ENCODE measurements at regions of chr3 and their contacts with region 1.

Region 1: GRCh38 chr3:55897573-55898224 is 410.6 kb upstream of the WNT5A start:
- DNase-seq: peak; percentile 60
- H3K4me3 Mint-ChIP-seq: no peak overlapping the region
- H3K27ac Mint-ChIP-seq: no peak overlapping the region
- H3K4me1 Mint-ChIP-seq: peaks cover 7% of the 10 kb centered on the region
- H3K27me3 Mint-ChIP-seq: no peaks in the 10 kb centered on the region
- CTCF ChIP-seq: peak; percentile 77

Region 2: DNA sequence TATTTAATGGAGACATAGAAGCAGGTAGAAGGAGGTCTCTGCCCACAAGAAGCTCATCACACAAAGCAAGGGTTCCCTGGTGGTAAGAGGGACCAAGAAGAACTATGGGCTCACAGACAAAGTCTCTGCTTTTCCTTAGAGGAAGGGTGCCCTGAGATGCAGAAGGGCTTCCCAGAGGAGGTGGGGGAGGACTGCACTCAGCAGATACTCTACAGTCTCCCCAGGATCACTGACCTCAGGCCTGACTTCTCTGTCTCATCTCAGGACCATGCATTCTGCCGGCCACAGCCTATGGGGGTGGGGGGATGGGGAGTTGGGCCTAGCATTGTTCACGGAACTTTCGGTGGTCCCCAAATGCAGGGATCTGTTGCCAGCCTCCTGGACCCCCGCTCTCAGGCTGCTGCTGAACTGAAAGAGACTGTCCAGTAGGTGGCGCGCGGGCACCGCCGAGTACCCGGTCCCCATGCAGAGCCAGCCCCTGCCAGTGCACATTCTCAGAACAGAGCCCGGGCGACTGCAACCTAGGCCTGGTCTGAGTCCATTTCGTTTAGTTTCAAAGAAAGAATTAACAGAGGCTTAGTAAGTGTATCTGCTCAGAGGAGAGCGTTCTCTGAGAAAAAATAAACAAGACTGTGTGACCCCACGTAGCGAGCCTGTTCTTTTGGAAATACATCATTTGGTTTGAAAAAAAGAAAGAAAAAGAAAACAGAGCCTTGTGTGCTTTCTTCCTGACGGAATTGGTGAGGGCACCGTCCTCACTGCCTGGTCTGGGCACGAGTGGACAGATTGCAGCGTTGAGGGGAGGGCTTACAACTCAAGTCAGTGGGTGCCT is 1043.9 kb before region 1 on chr3:
- CTCF ChIA-PET with region 1: interaction called, 6 read pairs
- POLR2A ChIA-PET with region 1: no interaction called
- intact Hi-C with region 1: loop called (anchors 5 kb)
- DNase-seq: peak; percentile 61
- H3K4me3 Mint-ChIP-seq: no peak overlapping the region
- H3K27ac Mint-ChIP-seq: peak overlapping the region; percentile 75
- H3K4me1 Mint-ChIP-seq: peaks cover 23% of the 10 kb centered on the region
- H3K27me3 Mint-ChIP-seq: peaks cover 16% of the 10 kb centered on the region
- CTCF ChIP-seq: peak; percentile 79

Region 3: GRCh38 chr3:54951405-54951804 is 946.3 kb before region 1 on chr3:
- CTCF ChIA-PET with region 1: no interaction called
- POLR2A ChIA-PET with region 1: no interaction called
- intact Hi-C with region 1: loop called (anchors 5 kb)
- DNase-seq: peak; percentile 78
- H3K4me3 Mint-ChIP-seq: no peak overlapping the region
- H3K27ac Mint-ChIP-seq: no peak overlapping the region
- H3K4me1 Mint-ChIP-seq: peaks cover 20% of the 10 kb centered on the region
- H3K27me3 Mint-ChIP-seq: no peaks in the 10 kb centered on the region
- CTCF ChIP-seq: peak; percentile 50

Region 4: DNA sequence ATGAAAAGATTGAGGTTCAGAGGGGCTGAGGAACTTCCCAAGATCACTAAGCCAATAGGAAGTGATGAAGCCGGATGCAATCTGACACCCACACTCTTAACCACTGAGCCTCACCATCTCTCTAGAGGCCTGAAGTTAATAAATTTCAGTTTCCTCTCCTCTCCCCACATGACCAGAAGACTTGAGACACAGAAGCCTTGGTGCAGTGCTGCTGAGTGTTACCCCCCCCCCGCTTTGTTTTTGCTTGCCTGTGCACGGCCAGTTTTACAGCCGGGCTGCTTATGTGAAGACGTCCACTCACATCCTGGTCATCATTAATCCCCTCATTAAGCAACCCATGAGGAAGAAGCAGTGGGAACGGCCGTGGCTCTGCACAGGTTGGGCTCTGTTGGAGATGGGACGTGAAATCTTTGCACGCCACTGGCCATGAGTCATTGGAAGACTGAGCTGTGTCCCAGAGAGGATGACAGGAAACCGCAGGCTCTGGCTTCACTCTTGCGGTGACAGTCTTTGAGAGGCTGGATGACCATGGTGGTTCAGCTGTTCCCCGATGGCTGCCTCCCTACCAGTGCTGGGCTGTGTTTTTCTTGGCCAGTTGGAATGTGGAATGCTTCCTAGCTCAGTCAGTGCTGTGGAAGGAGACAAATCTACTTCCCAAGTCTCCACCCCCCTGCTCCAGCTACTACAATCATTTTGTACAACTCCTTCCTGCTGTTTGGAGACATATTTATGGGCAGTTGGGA is 737.3 kb before region 1 on chr3:
- CTCF ChIA-PET with region 1: no interaction called
- POLR2A ChIA-PET with region 1: no interaction called
- intact Hi-C with region 1: loop called (anchors 10 kb)
- DNase-seq: peak; percentile 97
- H3K4me3 Mint-ChIP-seq: peak overlapping the region; percentile 28
- H3K27ac Mint-ChIP-seq: peak overlapping the region; percentile 86
- H3K4me1 Mint-ChIP-seq: peaks cover 52% of the 10 kb centered on the region
- H3K27me3 Mint-ChIP-seq: no peaks in the 10 kb centered on the region
- CTCF ChIP-seq: no peak

Region 5: DNA sequence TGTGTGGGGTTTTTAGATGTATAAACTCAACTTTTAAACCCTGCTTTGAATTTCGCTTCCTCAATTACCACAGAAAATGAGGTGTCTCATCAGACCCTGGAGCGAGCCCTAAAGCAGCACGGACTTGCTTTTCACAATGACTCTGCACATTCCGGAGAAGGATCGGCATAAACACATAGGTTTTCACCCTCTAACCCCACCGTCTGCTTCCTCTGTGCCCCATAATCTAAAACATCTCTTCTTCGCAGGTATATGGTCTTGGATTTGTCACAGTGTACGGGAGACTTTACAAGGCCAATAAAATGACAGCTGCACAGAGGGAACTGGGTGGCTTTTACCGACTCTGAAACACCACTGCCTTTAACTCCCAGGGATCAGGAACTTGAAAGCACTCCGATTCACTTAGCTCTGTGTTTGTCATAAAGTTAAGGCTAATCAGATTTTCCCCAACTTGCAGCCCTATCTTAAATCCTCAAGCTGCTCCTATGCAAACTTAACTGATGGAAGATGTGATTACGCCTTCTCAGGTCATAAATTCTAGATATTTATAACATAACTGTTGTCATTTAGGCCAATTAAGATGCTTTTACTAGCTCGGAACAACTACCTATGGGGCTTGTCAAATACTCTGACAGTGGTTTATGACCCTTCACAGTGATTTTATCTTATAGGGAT is 277.2 kb before region 1 on chr3:
- CTCF ChIA-PET with region 1: interaction called, 3 read pairs
- POLR2A ChIA-PET with region 1: no interaction called
- intact Hi-C with region 1: loop called (anchors 1 kb)
- DNase-seq: peak; percentile 42
- H3K4me3 Mint-ChIP-seq: no peak overlapping the region
- H3K27ac Mint-ChIP-seq: no peak overlapping the region
- H3K4me1 Mint-ChIP-seq: peaks cover 16% of the 10 kb centered on the region
- H3K27me3 Mint-ChIP-seq: no peaks in the 10 kb centered on the region
- CTCF ChIP-seq: no peak

Region 6: DNA sequence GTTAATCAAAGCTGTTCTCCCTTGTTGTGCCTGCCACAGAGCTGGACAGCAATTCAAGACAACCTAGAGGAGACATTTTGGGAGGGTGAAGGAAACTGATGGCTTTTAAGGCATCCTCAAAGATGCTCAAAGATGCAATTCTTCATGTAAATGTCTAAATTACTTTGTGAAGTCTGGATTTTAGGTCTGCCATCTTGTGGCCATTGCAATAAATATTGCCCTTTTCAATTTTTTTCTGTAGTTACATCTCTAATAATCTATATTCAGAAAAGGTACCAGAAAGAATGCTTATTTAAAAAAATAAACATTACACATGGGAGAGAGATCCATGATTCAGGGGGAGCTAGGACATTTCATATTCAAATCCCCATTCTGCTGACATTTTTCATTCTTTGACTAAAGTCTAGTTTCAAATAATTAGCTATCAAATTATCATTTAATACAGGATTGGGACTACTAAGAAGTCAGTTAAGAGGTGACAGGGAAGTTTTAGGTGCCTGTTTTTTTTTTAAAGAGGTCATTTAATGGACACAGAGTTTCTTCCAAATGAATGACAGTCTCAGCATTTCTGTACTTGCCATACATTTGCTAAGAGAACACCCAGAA is 150.8 kb before region 1 on chr3:
- CTCF ChIA-PET with region 1: interaction called, 11 read pairs
- POLR2A ChIA-PET with region 1: no interaction called
- intact Hi-C with region 1: loop called (anchors 2 kb)
- DNase-seq: peak; percentile 19
- H3K4me3 Mint-ChIP-seq: no peak overlapping the region
- H3K27ac Mint-ChIP-seq: no peak overlapping the region
- H3K4me1 Mint-ChIP-seq: peaks cover 7% of the 10 kb centered on the region
- H3K27me3 Mint-ChIP-seq: no peaks in the 10 kb centered on the region
- CTCF ChIP-seq: peak; percentile 30

Region 7: DNA sequence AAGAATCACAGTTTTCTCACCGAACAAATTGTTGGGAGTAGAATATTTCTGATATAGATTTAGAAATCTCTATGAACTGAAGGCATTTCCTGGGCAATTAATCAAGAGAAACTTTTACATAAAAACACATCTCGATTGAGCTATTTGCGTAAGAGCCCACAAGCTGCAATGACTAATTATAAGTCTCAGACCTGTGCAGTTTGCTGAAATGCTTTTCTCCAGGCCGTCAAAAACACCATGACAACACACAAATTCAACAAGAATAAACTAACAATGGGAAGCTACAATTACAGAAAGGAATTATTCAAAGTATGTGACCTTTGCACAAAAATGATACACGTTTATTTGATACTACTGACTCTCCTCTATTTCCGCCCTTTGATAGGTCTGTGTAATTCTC is 70.6 kb after region 1 on chr3:
- CTCF ChIA-PET with region 1: no interaction called
- POLR2A ChIA-PET with region 1: no interaction called
- intact Hi-C with region 1: no loop called
- DNase-seq: peak; percentile 73
- H3K4me3 Mint-ChIP-seq: no peak overlapping the region
- H3K27ac Mint-ChIP-seq: peak overlapping the region; percentile 28
- H3K4me1 Mint-ChIP-seq: peaks cover 13% of the 10 kb centered on the region
- H3K27me3 Mint-ChIP-seq: no peaks in the 10 kb centered on the region
- CTCF ChIP-seq: no peak

Region 8: GRCh38 chr3:56042326-56042951 is 144.7 kb after region 1 on chr3:
- CTCF ChIA-PET with region 1: interaction called, 5 read pairs
- POLR2A ChIA-PET with region 1: no interaction called
- intact Hi-C with region 1: loop called (anchors 1 kb)
- DNase-seq: peak; percentile 61
- H3K4me3 Mint-ChIP-seq: no peak overlapping the region
- H3K27ac Mint-ChIP-seq: no peak overlapping the region
- H3K4me1 Mint-ChIP-seq: no peaks in the 10 kb centered on the region
- H3K27me3 Mint-ChIP-seq: peaks cover 41% of the 10 kb centered on the region
- CTCF ChIP-seq: peak; percentile 44